ENCODE measurements at regions of chr11 and their contacts with region 1.

Region 1: GRCh38 chr11:75022759-75023396 is 34.1 kb downstream of the NEU3 start:
- DNase-seq: peak; percentile 91 to 96 (median 93)
- ATAC-seq: peak; percentile 96
- H3K4me3 ChIP-seq: no peak overlapping the region
- H3K27ac ChIP-seq: peak overlapping the region in 3 of 4 donors; percentile 7 to 43 (median 40)
- H3K4me1 ChIP-seq: peaks cover 8% of the 10 kb centered on the region
- H3K27me3 ChIP-seq: no peaks in the 10 kb centered on the region
- CTCF ChIP-seq: peak; percentile 91 to 97 (median 95)
- POLR2A ChIP-seq: peak in 1 of 3 donors; percentile 8

Region 2: GRCh38 chr11:75063732-75064314 is 40.9 kb after region 1 on chr11:
- intact Hi-C with region 1: no loop called
- DNase-seq: no peak
- ATAC-seq: no peak
- H3K4me3 ChIP-seq: no peak overlapping the region
- H3K27ac ChIP-seq: no peak overlapping the region
- H3K4me1 ChIP-seq: no peaks in the 10 kb centered on the region
- H3K27me3 ChIP-seq: no peaks in the 10 kb centered on the region
- CTCF ChIP-seq: no peak
- POLR2A ChIP-seq: no peak

Region 3: GRCh38 chr11:75078233-75078632 is 55.4 kb after region 1 on chr11:
- intact Hi-C with region 1: no loop called
- DNase-seq: no peak
- ATAC-seq: no peak
- H3K4me3 ChIP-seq: no peak overlapping the region
- H3K27ac ChIP-seq: no peak overlapping the region
- H3K4me1 ChIP-seq: no peaks in the 10 kb centered on the region
- H3K27me3 ChIP-seq: no peaks in the 10 kb centered on the region
- CTCF ChIP-seq: no peak
- POLR2A ChIP-seq: no peak

Region 4: GRCh38 chr11:75241036-75241905 is 218.4 kb after region 1 on chr11:
- intact Hi-C with region 1: loop called (anchors 10 kb)
- DNase-seq: peak; percentile 82 to 88 (median 86)
- ATAC-seq: peak; percentile 94
- H3K4me3 ChIP-seq: no peak overlapping the region
- H3K27ac ChIP-seq: no peak overlapping the region
- H3K4me1 ChIP-seq: peaks cover 21% of the 10 kb centered on the region
- H3K27me3 ChIP-seq: peaks cover 0 to 10% of the 10 kb centered on the region in 2 donors
- CTCF ChIP-seq: peak in 6 of 7 experiments; percentile 15 to 100 (median 98)
- POLR2A ChIP-seq: no peak